Activated naive CD4-positive, alpha-beta T cell treated with anti-CD3 and anti-CD28 coated beads for 36 hours (primary cell): ENCODE measurements at regions of chr10 and their contacts with region 1.

Region 1: DNA sequence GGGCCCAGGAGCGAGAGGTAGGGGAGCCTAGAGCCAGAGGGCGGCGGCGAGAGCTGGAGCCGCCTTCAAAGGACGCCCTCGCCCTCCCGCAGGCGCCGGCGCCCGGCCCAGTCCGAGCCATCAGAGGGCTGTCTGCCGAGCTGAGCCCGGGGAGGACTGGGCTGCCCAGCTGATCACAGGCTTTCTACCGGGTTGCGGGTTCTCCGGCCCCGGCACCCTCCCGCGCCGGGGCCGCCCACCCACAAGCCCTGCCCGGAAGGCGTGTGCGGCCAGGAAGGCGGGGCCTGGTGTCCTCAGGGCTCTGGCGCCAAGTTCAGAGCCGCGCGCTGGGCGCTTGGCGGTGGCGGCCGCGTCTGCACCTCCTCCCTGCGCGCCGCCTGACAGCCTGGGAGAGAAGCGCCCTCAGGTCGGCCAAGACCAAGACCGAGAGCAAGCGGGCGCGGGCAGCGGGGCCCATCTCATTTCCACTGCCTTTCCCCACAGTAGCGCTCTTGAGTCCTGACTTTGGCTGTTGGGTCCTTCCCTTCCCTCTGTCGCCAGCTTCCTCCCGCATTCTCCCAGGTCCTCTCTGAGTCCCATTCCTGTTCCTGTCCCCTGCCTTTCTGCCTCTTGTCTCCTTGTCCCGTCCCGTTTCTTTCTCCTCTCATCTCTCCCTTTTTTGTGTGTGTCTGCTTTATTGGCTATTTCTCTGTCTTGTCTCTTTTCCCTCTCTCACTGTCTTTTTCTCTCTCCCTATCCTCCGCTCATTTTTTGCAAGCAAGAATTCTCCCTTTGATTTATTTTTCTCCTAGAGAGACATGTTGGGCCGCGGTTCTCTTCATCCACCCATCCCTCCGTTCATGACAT is 60.6 kb upstream of the MSMB start:
- DNase-seq: peak; percentile 61
- H3K4me3 Mint-ChIP-seq: peak overlapping the region; percentile 84
- H3K27ac Mint-ChIP-seq: no peak overlapping the region
- H3K4me1 Mint-ChIP-seq: peaks cover 12% of the 10 kb centered on the region
- H3K27me3 Mint-ChIP-seq: no peaks in the 10 kb centered on the region

Region 2: DNA sequence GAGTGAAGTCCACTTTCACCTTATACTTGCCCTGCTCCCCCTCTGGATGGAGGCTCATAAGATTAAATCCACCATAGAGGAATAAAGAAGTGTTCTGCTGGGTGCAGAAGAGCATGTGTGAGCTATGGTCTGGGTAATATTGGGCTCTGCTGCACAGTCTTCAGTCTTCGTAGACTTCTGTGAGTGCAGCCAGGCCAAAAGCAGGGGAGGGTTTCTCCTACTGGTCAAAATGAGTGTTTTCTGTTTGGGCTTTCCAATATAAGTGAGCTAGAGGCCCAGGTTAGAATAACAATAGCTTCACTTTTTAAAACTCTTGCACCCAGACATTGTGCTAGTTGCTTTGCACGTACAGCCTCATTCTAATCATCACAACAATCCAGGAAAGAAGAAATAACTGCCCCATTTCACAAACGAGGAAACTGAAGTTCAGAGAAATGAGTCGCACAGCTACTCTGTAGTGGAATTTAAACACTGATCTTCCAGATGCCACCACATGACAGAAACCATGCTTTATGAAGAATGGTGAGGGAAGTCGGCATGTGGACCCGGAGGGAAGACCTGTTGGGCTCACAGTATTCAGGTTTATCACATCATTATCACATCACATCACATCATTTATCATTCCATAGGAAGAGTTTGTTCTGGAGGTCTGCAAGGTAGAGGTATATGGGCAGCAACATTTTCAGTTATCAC is 36.7 kb before region 1 on chr10:
- CTCF ChIA-PET with region 1: no interaction called
- intact Hi-C with region 1: no loop called
- DNase-seq: no peak
- H3K4me3 Mint-ChIP-seq: no peak overlapping the region
- H3K27ac Mint-ChIP-seq: no peak overlapping the region
- H3K4me1 Mint-ChIP-seq: peaks cover 5% of the 10 kb centered on the region
- H3K27me3 Mint-ChIP-seq: no peaks in the 10 kb centered on the region

Region 3: DNA sequence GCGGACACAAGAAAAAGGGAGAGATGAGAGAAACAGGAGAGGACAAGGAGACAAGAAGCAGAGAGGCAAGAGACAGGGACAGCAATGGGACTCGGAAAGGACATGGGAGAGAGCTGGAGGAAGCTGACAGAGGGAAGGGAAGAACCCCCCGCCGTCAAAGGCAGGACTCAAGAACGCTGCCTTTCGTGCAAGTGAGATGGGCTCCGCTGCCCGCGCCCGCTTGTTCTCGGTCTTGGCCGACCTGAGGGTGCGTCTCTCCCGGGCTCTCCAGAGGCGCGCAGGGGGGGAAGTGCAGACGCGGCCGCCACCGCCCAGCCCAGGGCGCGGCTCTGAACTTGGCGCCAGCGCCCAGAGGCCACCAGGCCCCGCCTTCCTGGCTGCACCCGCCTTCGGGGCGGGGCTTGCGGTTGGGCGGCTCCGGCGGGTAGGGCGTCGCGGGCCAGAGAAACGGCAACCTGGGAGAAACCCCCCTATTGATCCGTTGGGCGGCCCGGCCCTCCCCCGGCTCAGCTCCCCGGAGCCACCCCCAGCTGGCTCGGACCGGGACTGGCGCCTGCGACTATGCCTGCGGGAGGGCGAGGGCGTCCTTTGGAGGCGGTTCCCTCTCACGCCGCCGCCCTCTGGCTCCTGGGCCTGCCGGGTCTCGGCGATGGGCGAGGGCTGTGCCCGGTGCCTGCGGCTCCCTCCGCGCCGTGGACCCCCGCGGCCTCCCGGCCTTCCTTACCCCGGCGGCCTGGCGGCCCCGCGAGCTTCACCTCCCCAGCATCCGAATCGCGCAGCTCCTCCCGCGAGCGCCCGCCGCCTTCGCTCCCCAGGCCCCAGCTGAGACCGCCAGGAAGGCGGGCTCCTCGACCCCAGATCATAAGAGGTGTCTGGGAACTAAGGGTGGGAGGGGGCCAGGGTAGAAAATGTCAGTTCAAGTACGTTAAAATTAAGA is 177.9 kb after region 1 on chr10:
- CTCF ChIA-PET with region 1: no interaction called
- intact Hi-C with region 1: loop called (anchors 2 kb)
- DNase-seq: peak; percentile 81
- H3K4me3 Mint-ChIP-seq: peak overlapping the region; percentile 91
- H3K27ac Mint-ChIP-seq: peak overlapping the region; percentile 32
- H3K4me1 Mint-ChIP-seq: peaks cover 19% of the 10 kb centered on the region
- H3K27me3 Mint-ChIP-seq: no peaks in the 10 kb centered on the region